A673 (cell line): ENCODE measurements at regions of chr12 and their contacts with region 1.

Region 1: GRCh38 chr12:4030929-4031702 is 157.9 kb upstream of the PARP11 start:
- DNase-seq: peak; percentile 66
- H3K4me3 ChIP-seq: no peak overlapping the region
- H3K27ac ChIP-seq: no peak overlapping the region
- H3K4me1 ChIP-seq: no peaks in the 10 kb centered on the region
- H3K27me3 ChIP-seq: peaks cover 39% of the 10 kb centered on the region
- CTCF ChIP-seq: no peak

Region 2: DNA sequence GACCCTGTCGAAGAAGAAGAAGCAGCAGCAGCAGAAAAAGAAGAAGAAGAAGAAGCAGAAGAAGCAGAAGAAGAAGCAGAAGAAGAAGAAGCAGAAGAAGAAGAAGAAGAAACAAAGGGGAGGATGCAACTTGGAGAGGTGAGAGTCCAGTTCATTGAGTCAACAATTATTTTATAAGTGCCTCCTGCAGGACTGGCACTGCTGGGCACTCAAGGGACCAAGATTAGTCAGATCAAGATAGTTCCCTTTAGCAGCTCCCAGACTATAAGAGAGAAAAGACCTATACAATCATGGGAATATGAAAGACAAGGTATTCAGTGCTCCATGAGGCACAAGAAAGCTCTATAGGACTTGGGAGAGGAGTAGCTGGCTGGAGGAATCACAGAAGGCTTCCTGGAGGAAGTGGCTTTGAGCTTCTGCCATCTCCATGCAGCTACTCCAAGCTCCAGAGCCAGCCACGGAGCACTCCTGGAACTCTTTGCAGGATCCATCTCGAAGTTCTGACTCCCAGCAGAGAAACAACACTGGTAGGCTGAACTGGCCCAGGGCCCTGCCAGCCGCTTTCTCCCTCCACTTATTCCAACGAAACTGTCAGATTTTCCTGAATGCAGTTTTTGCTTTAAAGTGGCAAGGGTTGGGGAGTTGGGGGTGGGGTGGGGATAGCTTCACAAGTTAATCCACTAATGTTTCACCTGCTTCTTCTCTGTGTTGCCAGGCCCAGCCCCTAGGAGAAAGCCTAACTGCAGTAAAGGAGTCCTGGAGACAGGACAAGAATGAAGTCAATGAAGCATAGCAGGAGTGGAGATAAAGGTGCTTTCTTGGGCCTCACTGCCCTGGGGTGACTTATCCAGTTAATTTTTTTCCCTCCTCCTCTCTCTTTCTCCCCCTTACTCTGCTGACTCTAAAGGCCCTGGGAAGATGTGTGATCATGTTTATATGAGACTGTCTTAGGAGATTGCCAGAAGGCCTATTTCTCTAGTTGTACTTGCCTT is 17.8 kb before region 1 on chr12:
- CTCF ChIA-PET with region 1: no interaction called
- POLR2A ChIA-PET with region 1: interaction called, 20 read pairs
- intact Hi-C with region 1: no loop called
- DNase-seq: no peak
- H3K4me3 ChIP-seq: no peak overlapping the region
- H3K27ac ChIP-seq: no peak overlapping the region
- H3K4me1 ChIP-seq: no peaks in the 10 kb centered on the region
- H3K27me3 ChIP-seq: peaks cover 4% of the 10 kb centered on the region
- CTCF ChIP-seq: no peak

Region 3: DNA sequence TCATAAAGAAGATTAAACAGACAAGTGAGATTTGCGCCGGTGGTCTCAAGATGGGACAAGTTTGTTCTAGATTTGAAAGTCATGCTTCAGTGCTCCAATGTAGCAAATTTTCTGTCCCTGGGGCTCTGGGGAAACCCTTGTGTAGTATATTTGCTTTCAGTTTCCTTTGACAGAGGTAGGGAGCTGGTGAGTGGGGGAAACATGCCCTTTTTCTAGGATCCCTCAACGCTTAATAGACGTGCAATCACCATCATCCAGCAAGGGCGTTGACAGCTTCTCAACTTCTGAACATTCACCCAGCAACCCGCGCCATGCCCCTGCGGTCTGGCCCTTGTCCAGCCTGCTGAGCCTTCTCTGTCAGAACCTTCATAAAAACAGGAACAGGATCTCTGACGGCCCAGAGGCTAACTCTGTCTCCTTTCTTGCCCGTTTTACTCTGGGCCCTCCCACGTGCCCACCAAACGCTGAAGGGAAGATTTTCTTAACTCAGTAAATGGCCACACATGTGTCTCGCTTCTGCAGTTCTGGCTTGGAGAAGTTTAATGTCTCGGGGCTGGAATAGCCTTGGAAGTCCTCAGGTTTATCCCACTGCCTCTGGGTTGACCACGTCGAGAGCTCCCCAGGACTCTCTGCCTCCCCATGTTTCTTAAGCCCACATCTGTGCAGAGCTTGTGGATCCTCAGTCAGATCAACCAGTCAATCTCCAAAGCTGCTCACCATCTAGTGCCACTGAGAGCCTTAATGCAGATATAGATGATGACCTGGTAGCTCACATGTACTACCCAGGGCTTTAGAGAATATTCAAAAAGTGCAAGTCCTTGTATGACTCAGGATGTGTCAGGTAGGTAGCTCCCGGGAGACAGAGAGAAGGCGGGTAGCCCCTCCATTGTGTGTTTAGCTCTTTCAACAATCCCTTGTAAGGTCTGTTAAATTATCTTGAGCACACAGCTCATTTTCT is 184.4 kb after region 1 on chr12:
- CTCF ChIA-PET with region 1: no interaction called
- POLR2A ChIA-PET with region 1: no interaction called
- intact Hi-C with region 1: no loop called
- DNase-seq: no peak
- H3K4me3 ChIP-seq: no peak overlapping the region
- H3K27ac ChIP-seq: no peak overlapping the region
- H3K4me1 ChIP-seq: no peaks in the 10 kb centered on the region
- H3K27me3 ChIP-seq: peaks cover 15% of the 10 kb centered on the region
- CTCF ChIP-seq: no peak

Region 4: GRCh38 chr12:4855121-4855924 is 824.2 kb after region 1 on chr12:
- CTCF ChIA-PET with region 1: no interaction called
- POLR2A ChIA-PET with region 1: no interaction called
- intact Hi-C with region 1: no loop called
- DNase-seq: peak; percentile 82
- H3K4me3 ChIP-seq: no peak overlapping the region
- H3K27ac ChIP-seq: no peak overlapping the region
- H3K4me1 ChIP-seq: no peaks in the 10 kb centered on the region
- H3K27me3 ChIP-seq: peaks cover 35% of the 10 kb centered on the region
- CTCF ChIP-seq: peak; percentile 71